ENCODE measurements at regions of chr20 and their contacts with region 1.

Region 1: DNA sequence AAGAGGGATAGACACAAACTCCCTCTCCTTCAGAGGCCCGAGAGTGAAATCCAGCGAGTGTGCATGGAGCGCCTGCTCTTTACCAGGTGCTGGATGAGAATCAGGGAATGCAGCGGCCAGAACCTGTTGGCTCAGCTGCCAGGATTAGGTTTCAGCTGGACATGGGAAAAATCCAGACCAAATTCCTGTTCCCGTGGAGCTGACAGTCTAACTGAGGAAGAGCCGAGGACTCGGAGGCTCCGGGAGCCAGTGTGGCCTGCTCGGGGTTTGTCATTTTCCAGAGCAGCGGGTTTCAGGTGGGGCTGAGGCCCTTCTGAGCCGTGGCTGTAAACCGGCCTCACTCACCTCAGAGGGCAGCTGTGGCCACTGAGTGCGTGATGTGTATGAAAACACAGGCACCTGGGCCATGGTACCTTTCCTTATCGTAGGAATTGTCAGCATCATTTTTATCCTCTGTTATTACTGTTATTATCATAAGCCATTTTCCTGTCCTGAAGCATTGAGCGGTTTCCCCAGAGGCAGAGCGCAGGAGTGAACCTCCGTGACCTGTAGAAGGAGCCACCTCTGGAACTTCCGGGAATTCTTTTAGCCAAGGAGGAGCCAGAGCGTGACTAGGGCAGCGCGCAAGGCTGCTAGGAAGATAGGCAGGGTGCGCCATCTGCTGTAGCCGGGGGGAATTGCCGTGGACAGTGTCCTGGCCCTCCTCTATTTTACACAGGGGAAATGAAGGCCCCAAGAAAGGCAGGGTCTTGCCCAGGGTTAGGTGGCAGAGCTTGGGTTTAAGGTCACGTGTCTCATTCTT is 27.3 kb downstream of the PKIG start:
- DNase-seq: peak; percentile 92
- ATAC-seq: peak; percentile 94

Region 2: DNA sequence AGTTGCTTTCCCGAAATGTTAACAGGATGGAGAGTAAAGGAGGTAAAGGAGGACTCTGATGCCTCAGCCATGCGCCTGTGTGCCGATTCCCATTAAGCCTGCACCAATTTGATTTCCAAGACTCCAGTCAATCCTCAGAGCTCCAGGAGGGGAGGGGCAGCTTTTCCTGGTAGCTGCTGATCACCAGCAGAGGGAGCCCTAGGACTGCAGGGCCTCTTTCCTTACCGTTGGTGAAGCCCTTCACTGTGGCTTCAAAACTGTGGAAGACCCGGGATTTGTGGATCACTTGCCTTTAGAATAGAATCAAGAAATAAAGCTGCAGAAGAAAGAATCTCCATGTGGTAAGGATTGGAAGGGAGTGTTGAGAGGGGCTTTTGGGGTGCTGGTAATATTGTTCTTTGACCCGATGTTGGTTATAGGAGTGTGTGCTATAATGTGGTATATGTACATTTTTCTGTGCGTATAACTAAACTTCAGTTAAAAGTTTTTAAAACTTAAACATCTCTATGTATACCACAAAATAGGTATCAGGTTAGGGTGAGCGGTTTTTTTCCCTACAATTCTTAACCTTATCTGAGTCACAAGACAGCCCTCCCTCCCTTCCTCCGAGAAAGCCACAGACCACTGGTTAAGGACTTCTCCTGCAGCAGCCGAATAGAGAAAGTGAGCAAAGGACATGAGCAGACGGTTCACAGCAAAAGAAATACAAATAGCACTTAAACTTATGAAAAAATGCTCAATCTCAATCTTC is 392.2 kb before region 1 on chr20:
- intact Hi-C with region 1: loop called (anchors 5 kb)
- DNase-seq: no peak
- ATAC-seq: peak; percentile 73

Region 3: GRCh38 chr20:44279228-44279627 is 330.5 kb before region 1 on chr20:
- intact Hi-C with region 1: no loop called
- DNase-seq: no peak
- ATAC-seq: no peak

Region 4: DNA sequence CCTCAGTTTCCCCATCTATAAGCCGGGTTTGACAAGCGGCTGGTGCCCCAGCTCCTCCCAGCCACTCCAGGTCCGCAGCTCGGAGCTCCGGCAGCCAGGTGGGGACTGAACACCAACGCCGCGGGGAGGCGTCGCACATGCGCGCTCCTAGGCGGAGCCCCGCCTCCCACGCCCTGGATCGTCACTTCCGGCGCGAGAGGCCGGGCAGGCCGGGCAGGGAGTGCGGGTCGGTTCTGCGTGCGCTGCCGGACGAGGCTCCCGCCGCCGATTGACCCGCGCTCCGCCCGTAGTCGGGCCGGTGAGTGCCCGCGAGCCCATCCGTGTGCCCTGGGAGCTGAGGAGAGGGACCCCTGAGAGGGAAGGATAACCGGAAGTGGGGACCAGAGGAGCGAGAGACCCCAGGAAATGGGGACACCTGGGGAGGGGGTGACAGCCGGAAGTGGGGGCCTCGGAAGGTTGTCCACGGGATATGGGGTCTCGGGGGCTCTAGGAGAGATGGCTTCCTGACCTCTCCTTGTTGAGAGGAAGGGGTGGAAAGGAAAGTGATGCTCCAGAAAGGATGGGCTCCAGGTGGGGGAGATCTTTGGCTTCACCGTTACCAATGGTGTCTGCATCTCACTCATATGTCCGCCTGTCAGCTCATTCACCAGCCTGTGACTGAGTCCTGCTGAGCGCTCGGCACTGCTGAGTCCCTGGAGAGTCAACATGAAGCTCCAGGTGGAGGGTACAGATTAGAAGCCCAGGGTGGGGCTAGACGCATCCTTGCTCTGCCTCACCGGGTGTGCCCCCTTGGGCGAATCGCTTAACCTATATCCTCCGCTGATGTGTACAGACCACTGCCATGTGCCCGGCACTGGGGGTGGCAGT is 133.8 kb before region 1 on chr20 and contains the start of gene TTPAL:
- intact Hi-C with region 1: loop called (anchors 1 kb)
- DNase-seq: peak; percentile 96
- ATAC-seq: peak; percentile 97
- total RNA-seq, gene TTPAL: 2.9 TPM

Region 5: DNA sequence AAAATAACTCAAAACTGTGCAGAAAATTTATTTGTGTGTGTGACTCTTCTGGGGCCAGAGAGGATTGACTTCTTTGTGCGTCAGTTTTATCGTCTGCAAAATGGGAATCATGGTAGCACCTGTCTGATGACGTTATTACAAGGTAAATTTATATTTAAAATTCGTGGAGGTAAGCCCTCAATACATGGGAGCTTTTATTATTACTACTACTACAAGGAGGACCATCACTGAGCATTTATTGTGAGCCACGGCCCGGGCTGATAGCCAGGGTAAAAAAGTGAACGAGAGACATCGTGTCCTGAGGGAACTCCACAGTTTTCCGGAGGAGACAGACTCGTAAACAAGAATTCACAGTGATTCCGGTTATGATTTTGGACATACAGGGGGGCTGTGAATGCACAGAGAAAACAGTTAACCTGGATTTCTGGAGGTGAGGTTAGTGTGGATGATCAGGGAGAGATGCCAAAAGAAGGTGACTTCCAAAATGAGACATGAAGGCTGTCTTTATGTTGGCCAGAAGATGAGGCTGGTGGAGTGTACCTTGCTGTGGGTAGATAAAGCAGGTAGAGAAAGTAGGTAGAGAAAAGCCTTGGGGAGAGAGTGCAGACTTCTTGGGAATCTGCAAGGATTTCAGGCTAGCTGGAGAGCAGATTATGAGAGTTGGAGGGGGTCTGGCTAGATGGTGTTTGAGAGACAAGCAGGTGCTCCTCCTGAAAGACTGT is 77.3 kb before region 1 on chr20:
- intact Hi-C with region 1: loop called (anchors 1 kb)
- DNase-seq: no peak
- ATAC-seq: peak; percentile 53

Region 6: DNA sequence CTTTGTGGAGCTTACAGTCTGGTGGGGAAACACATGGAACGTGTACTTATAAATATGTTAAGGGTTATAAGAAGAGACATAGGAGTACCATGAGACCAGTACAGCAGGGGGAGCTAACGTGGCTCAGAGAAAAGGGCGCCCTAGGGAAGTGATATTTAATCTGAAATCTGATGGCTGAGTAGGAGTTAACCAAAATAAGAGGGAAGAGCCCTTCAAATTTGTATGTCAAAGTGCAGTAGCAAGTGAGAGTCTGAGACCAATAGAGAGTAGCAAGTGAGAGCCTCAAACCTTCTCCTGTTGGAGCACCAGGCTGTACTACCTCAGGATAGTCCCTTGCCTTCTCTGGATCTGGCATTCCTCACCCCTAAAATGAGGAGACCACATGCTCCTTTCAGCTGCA is 33.4 kb before region 1 on chr20:
- intact Hi-C with region 1: loop called (anchors 1 kb)
- DNase-seq: no peak
- ATAC-seq: no peak

Region 7: GRCh38 chr20:44683263-44684046 is 73.7 kb after region 1 on chr20:
- intact Hi-C with region 1: loop called (anchors 2 kb)
- DNase-seq: no peak
- ATAC-seq: peak; percentile 55